RWPE1 (cell line): ENCODE measurements at regions of chr20 and their contacts with region 1.

Region 1: GRCh38 chr20:1734269-1734858 is 76.8 kb upstream of the SIRPG start:
- DNase-seq: no peak
- H3K27ac ChIP-seq: no peak overlapping the region
- CTCF ChIP-seq: no peak

Region 2: DNA sequence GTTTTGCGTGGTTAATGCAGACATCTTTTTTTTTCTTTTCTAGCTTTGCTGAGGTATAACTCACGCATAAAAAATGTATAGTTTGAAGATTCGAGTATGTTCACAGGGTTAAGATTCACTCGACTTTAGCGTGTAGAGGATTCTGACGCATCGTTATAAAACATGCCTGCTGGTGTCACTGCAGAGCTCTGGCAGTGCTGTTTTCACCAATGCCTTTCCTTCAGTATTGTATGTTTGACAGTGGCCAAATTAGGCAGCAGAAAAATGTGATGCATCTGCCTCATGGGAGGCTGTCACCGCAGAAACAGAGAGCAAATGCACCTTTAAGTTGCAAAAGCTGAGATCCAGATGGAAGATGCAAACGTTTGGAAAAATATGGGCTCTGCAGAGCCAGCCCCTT is 225.1 kb before region 1 on chr20:
- CTCF ChIA-PET with region 1: interaction called, 18 read pairs
- POLR2A ChIA-PET with region 1: no interaction called
- DNase-seq: no peak
- H3K27ac ChIP-seq: no peak overlapping the region
- CTCF ChIP-seq: peak; percentile 34